Psoas muscle (tissue), 8 donors: ENCODE measurements at regions of chr5 and their contacts with region 1.

Region 1: GRCh38 chr5:177113566-177114424 is 19.8 kb upstream of the NSD1 start:
- DNase-seq: peak; percentile 72 to 88
- ATAC-seq: peak; percentile 65 to 69 (median 66)
- H3K4me3 ChIP-seq: peak overlapping the region; percentile 6
- H3K27ac ChIP-seq: no peak overlapping the region
- H3K4me1 ChIP-seq: peaks cover 14% of the 10 kb centered on the region
- H3K27me3 ChIP-seq: no peaks in the 10 kb centered on the region
- CTCF ChIP-seq: peak; percentile 98

Region 2: GRCh38 chr5:177071666-177072385 is 42.0 kb before region 1 on chr5:
- intact Hi-C with region 1: loop called in 1 of 2 experiments (anchors 2 kb)
- DNase-seq: no peak
- ATAC-seq: peak; percentile 77 to 86 (median 80)
- H3K4me3 ChIP-seq: no peak overlapping the region
- H3K27ac ChIP-seq: no peak overlapping the region
- H3K4me1 ChIP-seq: peaks cover 2% of the 10 kb centered on the region
- H3K27me3 ChIP-seq: no peaks in the 10 kb centered on the region
- CTCF ChIP-seq: peak; percentile 86

Region 3: DNA sequence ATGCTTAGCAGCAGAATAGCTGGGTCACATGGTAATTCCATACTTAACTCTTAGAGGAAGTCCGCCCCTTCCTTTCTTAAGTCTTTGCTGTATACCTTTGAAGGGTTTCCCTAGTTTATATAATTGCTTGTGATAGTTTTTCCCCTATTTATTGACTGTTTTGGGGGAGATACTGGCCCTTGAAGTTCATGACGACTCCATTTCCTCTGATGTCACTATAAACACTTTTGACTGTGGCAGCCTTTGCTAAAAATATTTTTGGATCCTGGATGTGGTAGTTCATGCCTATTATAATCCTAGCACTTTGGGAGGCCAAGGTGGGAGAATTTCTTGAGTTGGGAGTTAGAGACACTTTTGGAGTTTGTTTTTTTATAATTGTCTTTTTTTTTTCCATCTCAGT is 58.2 kb after region 1 on chr5:
- intact Hi-C with region 1: no loop called
- DNase-seq: no peak
- ATAC-seq: peak in 1 of 4 donors; percentile 43
- H3K4me3 ChIP-seq: no peak overlapping the region
- H3K27ac ChIP-seq: peak overlapping the region; percentile 1
- H3K4me1 ChIP-seq: peaks cover 23% of the 10 kb centered on the region
- H3K27me3 ChIP-seq: no peaks in the 10 kb centered on the region
- CTCF ChIP-seq: no peak

Region 4: GRCh38 chr5:177234841-177235240 is 121.0 kb after region 1 on chr5:
- intact Hi-C with region 1: loop called in 1 of 2 experiments (anchors 5 kb)
- DNase-seq: no peak
- ATAC-seq: no peak
- H3K4me3 ChIP-seq: no peak overlapping the region
- H3K27ac ChIP-seq: no peak overlapping the region
- H3K4me1 ChIP-seq: peaks cover 35% of the 10 kb centered on the region
- H3K27me3 ChIP-seq: no peaks in the 10 kb centered on the region
- CTCF ChIP-seq: no peak

Region 5: GRCh38 chr5:177303121-177303924 is 189.5 kb after region 1 on chr5 and contains the starts of genes PRELID1 and RAB24:
- intact Hi-C with region 1: loop called in 1 of 2 experiments (anchors 5 kb)
- DNase-seq: peak; percentile 90 to 95
- ATAC-seq: peak; percentile 87 to 92 (median 88)
- H3K4me3 ChIP-seq: peak within 1 kb of the TSS; percentile 97
- H3K27ac ChIP-seq: peak within 1 kb of the TSS; percentile 92
- H3K4me1 ChIP-seq: peaks cover 39% of the 10 kb centered on the region
- H3K27me3 ChIP-seq: no peaks in the 10 kb centered on the region
- CTCF ChIP-seq: peak; percentile 23
- total RNA-seq, gene PRELID1: 19.9 to 66.8 (median 44.3) TPM
- total RNA-seq, gene RAB24: 14.9 to 21.1 (median 20.1) TPM